ENCODE measurements at regions of chr3 and their contacts with region 1.

Region 1: GRCh38 chr3:173045770-173046382 is 95.2 kb downstream of the SPATA16 start:
- DNase-seq: no peak
- ATAC-seq: no peak

Region 2: DNA sequence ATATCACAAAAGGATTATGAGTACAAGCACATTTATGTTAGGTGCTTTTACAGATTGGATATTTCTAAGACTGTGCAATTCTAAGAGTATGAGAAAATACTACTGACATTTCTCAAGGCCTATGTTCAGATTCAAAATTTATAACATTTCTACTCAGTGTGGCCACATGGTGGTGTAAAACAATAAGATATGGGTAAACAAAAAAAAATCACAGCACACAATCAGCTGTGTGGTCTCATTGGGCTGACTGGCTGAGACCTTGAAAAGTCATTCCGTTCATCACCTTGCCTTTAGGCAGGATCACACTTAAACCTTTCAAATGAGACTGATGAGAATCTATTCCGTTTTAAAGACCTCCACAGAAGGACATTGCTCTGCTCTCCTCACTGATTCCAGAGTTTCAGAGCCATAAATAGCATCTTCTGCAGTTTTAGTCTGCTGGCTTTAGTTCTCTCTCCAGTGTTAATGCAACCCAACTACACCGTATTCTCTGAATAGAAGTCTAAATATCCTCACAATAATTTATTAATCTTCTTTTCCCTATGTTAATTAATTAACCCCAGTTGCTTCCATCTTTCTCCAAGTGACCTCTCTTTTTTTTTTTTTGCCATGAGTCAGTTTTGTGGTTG is 63.0 kb before region 1 on chr3:
- intact Hi-C with region 1: loop called in 1 of 2 experiments (anchors 10 kb)
- DNase-seq: no peak
- ATAC-seq: peak in 1 of 2 donors; percentile 34

Measured in left cardiac atrium (tissue), 4 donors.